ENCODE measurements at regions of chr2 and their contacts with region 1.

Region 1: GRCh38 chr2:121095257-121096080 is 189.5 kb downstream of the TFCP2L1 start:
- DNase-seq: peak; percentile 83 to 87
- H3K4me3 ChIP-seq: no peak overlapping the region
- H3K27ac ChIP-seq: no peak overlapping the region
- H3K4me1 ChIP-seq: peaks cover 0 to 30% (median 10%) of the 10 kb centered on the region in 4 donors
- H3K27me3 ChIP-seq: peaks cover 0 to under 1% (median 0%) of the 10 kb centered on the region in 3 donors
- CTCF ChIP-seq: peak in 5 of 7 experiments; percentile 70 to 93 (median 75)
- EP300 ChIP-seq: no peak
- POLR2A ChIP-seq: no peak

Region 2: DNA sequence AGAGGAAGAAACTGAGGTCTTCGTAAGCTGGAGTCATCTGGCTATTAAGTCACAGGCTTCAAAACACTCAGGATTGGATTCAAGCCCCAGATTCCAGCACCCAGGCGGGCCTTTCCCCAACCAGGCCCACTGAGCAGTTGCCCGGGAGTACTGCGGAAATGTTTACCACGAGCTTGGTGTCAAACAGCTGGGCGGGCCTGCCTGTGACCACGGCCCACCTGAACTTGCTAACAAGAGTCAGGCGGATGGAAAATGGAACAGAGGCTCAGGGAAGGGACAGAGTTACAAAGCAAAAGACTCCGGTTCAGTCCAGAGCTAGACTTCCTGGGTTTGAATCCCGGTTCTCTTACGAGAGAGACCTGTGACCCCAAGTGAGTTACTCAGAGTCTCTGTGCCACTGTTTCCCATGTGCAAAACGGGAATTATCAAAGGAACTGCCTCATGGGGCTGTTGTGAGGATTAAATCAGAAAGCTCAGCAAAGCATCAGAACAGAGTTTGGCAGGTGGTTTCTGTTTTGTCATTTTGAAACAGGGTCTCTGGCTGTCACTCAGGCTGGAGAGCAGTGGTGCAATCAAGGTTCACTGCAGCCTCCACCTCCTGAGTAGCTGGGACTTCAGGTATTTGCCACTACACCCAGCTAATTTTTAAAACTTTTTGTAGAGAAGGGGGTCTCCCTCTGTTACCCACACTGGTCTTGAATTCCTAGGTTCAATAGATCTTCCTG is 238.5 kb after region 1 on chr2:
- intact Hi-C with region 1: loop called (anchors 10 kb)
- DNase-seq: peak; percentile 23 to 32
- H3K4me3 ChIP-seq: no peak overlapping the region
- H3K27ac ChIP-seq: no peak overlapping the region
- H3K4me1 ChIP-seq: peaks cover 0 to 6% (median 0%) of the 10 kb centered on the region in 4 donors
- H3K27me3 ChIP-seq: no peaks in the 10 kb centered on the region
- CTCF ChIP-seq: no peak
- EP300 ChIP-seq: no peak
- POLR2A ChIP-seq: no peak

Region 3: DNA sequence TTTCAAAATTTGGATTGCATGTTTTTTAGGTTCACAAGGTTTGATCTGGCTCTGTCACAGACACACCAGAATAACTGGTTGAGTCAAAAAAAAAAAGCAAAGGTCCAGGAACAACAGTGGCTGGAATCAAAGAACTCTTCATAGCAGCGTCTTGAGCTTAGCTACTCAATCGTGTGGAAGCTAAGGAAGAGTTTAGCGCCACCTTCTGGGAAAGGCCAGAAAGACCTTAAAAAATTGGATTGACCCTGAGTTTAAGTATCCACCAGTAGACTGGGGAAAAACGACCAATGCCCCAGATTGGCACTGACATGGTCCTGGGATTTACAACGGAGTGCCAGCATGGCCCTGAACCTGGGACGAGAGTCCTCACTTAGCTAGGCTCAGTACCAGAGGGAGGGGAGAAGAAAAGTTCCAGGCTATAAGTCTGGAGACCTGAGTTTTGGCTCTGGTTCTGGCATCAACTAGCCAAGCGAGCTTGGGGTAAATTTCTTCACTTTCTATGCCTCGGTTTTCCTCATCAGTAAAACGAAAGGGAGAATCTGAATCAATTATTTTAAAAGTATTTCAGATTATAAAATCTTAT is 260.7 kb after region 1 on chr2:
- intact Hi-C with region 1: loop called (anchors 10 kb)
- DNase-seq: peak; percentile 56 to 89
- H3K4me3 ChIP-seq: no peak overlapping the region
- H3K27ac ChIP-seq: peak overlapping the region; percentile 42 to 83 (median 60)
- H3K4me1 ChIP-seq: peaks cover 25 to 51% (median 37%) of the 10 kb centered on the region in 4 donors
- H3K27me3 ChIP-seq: no peaks in the 10 kb centered on the region
- CTCF ChIP-seq: peak in 5 of 7 experiments; percentile 36 to 70 (median 49)
- EP300 ChIP-seq: no peak
- POLR2A ChIP-seq: no peak

Measured in stomach (tissue), 19 donors.